GM10248 (cell line): ENCODE measurements at regions of chr9 and their contacts with region 1.

Region 1: GRCh38 chr9:75088260-75088905 is at the start of gene OSTF1:
- DNase-seq: peak; percentile 93
- CTCF ChIP-seq: no peak

Region 2: DNA sequence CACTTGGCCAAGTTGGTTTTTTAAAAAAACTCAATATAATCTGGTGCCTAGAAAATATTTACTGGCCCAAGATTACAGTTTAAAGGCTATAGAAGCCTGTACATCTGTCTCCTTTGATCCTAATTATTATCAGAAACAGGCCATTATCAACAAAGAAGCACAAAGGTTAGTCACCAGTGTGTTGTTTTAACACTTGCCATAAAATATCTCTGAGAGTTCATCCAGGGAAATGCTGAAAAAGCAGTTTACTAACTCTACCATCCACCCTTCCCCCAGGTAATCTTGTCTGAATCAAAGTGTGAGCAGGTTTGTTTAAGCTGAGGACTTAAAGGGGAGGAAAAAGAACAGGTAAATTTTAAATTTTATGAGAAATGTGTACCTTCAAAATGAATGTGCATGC is 187.4 kb before region 1 on chr9:
- CTCF ChIA-PET with region 1: no interaction called
- POLR2A ChIA-PET with region 1: no interaction called
- DNase-seq: no peak
- CTCF ChIP-seq: no peak

Region 3: DNA sequence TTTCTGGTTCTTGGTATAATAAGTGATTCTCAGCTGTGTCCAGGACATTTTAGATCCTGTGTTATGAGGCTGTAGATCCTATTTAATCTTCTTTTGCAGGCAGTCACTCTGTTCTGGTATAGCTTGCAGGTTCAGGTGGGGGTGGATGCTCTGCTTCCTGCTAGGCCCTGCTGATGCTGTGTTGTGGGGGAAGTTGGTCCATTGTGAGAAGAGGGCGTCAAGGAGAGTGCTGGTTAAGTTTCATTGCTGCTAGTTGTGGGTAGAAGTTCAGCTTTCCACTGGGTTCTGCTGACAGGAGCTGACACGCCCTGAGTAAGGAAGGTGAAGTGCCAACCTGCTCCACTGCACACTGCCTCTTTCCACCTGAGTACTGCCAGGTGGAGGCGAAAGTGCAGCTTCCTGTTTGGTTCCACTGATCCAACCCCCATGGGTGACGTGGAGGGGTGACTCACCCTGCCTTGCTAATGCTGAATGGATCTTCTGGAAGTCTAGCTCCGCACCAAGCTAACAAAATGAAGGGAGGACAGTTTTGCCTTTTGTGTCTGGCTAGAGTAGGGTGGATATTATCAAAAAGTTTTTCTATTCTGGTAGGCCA is 16.8 kb before region 1 on chr9:
- CTCF ChIA-PET with region 1: interaction called, 17 read pairs
- POLR2A ChIA-PET with region 1: no interaction called
- DNase-seq: no peak
- CTCF ChIP-seq: no peak